ENCODE measurements at regions of chr12 and their contacts with region 1.

Region 1: DNA sequence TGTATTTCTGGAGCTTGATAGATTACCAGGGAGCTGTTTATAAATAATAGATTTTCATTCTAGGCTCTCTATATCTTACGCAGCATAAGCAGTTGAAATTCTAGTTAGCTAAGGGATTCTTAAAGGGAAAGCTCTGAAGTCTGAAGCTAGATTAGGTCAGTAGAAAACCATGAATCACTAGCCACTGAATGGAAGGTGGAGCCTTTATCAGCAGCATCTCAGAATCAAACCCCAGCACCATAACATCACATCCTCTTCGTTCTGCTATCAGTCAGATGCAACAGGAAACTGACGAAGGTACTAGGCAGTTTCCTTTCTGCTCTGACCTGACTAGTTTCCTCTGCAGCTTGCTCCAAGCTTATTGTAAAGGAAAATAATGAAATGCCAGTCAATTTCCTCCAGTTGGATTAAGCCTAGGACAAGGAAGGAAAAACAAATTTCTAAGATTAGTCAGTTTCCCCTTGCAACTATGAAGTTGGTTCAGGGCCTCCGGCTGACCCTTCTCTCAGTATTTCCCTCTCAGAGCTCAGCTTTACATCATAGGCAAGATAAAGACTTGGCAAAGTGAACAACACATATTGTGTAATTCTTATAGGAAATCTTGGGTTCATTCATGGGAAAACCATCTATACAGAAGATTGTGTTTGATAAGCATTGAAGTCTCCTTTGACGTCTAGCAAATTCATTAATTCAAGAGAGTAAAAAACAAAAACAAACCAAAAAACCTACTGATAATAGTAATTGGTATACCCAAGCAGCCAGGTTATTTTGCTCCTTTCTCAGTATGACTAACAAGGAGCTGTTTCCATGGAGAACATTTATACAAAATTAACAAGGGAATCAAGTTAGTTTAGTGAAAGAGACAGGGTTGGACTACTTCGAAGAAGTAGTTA is 43.4 kb upstream of the CFAP54 start:
- DNase-seq: peak; percentile 70
- H3K4me3 Mint-ChIP-seq: peak overlapping the region; percentile 48
- H3K27ac Mint-ChIP-seq: peak overlapping the region; percentile 96
- H3K4me1 Mint-ChIP-seq: peaks cover 51% of the 10 kb centered on the region
- H3K27me3 Mint-ChIP-seq: no peaks in the 10 kb centered on the region

Region 2: GRCh38 chr12:96194971-96195844 is 250.7 kb before region 1 on chr12:
- intact Hi-C with region 1: loop called (anchors 5 kb)
- DNase-seq: peak; percentile 68
- H3K4me3 Mint-ChIP-seq: peak overlapping the region; percentile 96
- H3K27ac Mint-ChIP-seq: peak overlapping the region; percentile 98
- H3K4me1 Mint-ChIP-seq: peaks cover 49% of the 10 kb centered on the region
- H3K27me3 Mint-ChIP-seq: no peaks in the 10 kb centered on the region

Region 3: GRCh38 chr12:96343347-96343954 is 102.5 kb before region 1 on chr12:
- intact Hi-C with region 1: loop called (anchors 5 kb)
- DNase-seq: peak; percentile 21
- H3K4me3 Mint-ChIP-seq: peak overlapping the region; percentile 24
- H3K27ac Mint-ChIP-seq: peak overlapping the region; percentile 79
- H3K4me1 Mint-ChIP-seq: peaks cover 54% of the 10 kb centered on the region
- H3K27me3 Mint-ChIP-seq: no peaks in the 10 kb centered on the region

Region 4: GRCh38 chr12:96427269-96427729 is 18.6 kb before region 1 on chr12:
- intact Hi-C with region 1: loop called (anchors 1 kb)
- DNase-seq: no peak
- H3K4me3 Mint-ChIP-seq: peak overlapping the region; percentile 1
- H3K27ac Mint-ChIP-seq: peak overlapping the region; percentile 53
- H3K4me1 Mint-ChIP-seq: peaks cover 52% of the 10 kb centered on the region
- H3K27me3 Mint-ChIP-seq: peaks cover 5% of the 10 kb centered on the region

Region 5: GRCh38 chr12:96434107-96434506 is 11.8 kb before region 1 on chr12:
- intact Hi-C with region 1: loop called (anchors 1 kb)
- DNase-seq: peak; percentile 75
- H3K4me3 Mint-ChIP-seq: peak overlapping the region; percentile 9
- H3K27ac Mint-ChIP-seq: peak overlapping the region; percentile 32
- H3K4me1 Mint-ChIP-seq: peaks cover 32% of the 10 kb centered on the region
- H3K27me3 Mint-ChIP-seq: peaks cover 6% of the 10 kb centered on the region

Region 6: DNA sequence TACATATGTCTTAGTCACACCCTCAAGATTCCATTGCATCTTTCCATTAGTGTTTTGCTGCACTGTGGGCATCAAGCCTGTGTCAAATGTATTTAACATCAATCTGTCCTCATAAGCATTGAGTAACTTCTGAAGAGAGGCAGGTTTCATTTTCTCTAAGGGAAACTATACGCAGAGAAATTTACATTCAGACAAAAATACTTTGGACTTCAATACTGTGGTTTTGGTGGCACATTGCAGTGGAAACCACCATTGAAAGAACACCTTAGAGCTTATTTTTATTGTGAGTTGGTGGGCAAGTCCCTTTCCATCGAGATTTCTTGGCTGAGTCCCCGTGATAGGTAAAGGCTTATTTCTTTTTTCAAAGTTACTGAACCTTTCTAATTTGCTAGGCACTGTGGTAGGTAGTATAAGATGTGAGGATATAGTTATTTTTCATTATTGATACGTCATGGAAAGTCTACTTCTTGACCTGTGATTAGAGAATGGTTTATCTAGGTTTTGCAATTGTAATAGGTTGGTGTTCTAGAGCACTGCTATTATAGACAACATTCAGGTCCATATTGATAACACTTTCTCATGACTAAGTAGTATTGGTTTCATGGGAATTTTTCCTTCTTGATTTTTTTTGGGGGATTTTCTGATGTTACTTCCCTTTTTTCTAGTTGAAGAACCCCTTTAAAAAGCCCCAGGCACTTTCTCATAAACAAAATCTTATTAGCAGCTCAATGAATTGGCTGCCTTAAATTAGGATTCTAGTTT is 125.3 kb after region 1 on chr12:
- intact Hi-C with region 1: loop called (anchors 1 kb)
- DNase-seq: no peak
- H3K4me3 Mint-ChIP-seq: peak overlapping the region; percentile 15
- H3K27ac Mint-ChIP-seq: peak overlapping the region; percentile 40
- H3K4me1 Mint-ChIP-seq: peaks cover 14% of the 10 kb centered on the region
- H3K27me3 Mint-ChIP-seq: no peaks in the 10 kb centered on the region

Measured in activated T-helper 1 cell treated with anti-CD3 and anti-CD28 coated beads, Interleukin-12 subunit alpha, Interleukin-12 subunit beta, Interleukin-2, Interleukin-4 antibody, amounts not matched to agents 30 ng/mL and 10 ng/mL and 1 ng/mL, durations not matched to agents 14 hours and 24 hours and 36 hours (primary cell).